ENCODE measurements at regions of chr15 and their contacts with region 1.

Region 1: DNA sequence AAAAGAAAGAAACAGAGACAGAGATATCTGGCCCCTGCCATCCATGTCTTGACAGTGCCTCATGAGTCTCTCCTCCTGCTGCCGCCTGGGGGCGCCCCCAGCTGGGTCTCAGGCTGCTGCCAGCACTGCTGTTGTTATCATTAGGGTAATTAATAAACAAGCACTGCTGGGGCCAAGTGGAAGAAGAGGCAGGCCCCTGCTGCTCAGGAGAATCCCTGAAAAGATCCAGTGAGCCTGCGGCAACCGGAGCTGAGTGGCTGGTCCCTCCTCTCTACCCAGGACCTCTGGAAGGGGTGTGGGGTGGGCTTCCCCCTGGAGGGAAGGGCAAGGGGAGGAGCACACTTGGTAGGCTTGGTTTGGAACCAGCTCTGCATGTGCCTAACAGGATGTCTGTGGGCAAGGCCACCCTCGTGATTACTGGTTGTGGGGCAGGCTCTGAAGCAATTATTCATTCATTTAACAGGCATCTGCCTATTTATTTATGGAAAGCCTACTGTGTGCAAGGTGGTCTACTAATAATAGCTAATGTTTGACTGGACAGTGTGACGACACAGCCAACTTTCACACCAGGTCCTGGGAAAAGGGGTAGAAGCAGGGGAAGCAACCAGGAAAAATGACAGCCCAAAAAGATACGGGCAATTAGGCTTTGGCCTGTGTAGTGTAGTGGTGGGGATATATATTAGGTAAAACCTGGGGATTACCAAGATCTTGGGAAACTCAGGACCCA is 1.2 kb upstream of the TYRO3 start:
- DNase-seq: peak; percentile 47
- ATAC-seq: peak; percentile 69
- H3K4me3 ChIP-seq: peak overlapping the region; percentile 67 to 82 (median 77)
- H3K27ac ChIP-seq: no peak overlapping the region
- H3K4me1 ChIP-seq: peaks cover 65% of the 10 kb centered on the region
- H3K27me3 ChIP-seq: peaks cover 0 to 8% of the 10 kb centered on the region in 2 experiments; a peak in 2 of 5 replicates
- CTCF ChIP-seq: peak; percentile 88
- EP300 ChIP-seq: no peak
- POLR2A ChIP-seq: no peak
- RAD21 ChIP-seq: peak; percentile 90

Region 2: GRCh38 chr15:41568350-41569017 is 10.6 kb after region 1 on chr15:
- CTCF ChIA-PET with region 1: interaction called, 6 read pairs
- POLR2A ChIA-PET with region 1: interaction called, 24 read pairs
- in situ Hi-C with region 1: no loop called
- intact Hi-C with region 1: loop called (anchors 1 kb)
- DNase-seq: peak; percentile 98
- ATAC-seq: peak; percentile 88
- H3K4me3 ChIP-seq: peak overlapping the region in 2 of 3 experiments; percentile 14 to 54; a peak in 4 of 6 replicates
- H3K27ac ChIP-seq: peak overlapping the region; percentile 91
- H3K4me1 ChIP-seq: peaks cover 84% of the 10 kb centered on the region
- H3K27me3 ChIP-seq: no peaks in the 10 kb centered on the region
- CTCF ChIP-seq: peak; percentile 42
- EP300 ChIP-seq: peak; percentile 83 to 94
- POLR2A ChIP-seq: peak in 1 of 2 experiments; percentile 49; a peak in 2 of 4 replicates
- RAD21 ChIP-seq: 0 out of 2 replicates have a peak, but pooled peaks have one; percentile 53

Region 3: GRCh38 chr15:41603941-41604911 is 46.4 kb after region 1 on chr15:
- CTCF ChIA-PET with region 1: interaction called, 17 read pairs
- POLR2A ChIA-PET with region 1: interaction called, 5 read pairs
- in situ Hi-C with region 1: no loop called
- intact Hi-C with region 1: loop called (anchors 5 kb)
- DNase-seq: peak; percentile 63
- ATAC-seq: peak; percentile 95
- H3K4me3 ChIP-seq: peak overlapping the region in 1 of 3 experiments; percentile 47; a peak in 2 of 6 replicates
- H3K27ac ChIP-seq: no peak overlapping the region
- H3K4me1 ChIP-seq: peaks cover 23% of the 10 kb centered on the region
- H3K27me3 ChIP-seq: no peaks in the 10 kb centered on the region
- CTCF ChIP-seq: peak; percentile 86
- EP300 ChIP-seq: no peak
- POLR2A ChIP-seq: no peak
- RAD21 ChIP-seq: peak; percentile 78

Region 4: GRCh38 chr15:41811432-41812195 is 253.8 kb after region 1 on chr15:
- CTCF ChIA-PET with region 1: no interaction called
- POLR2A ChIA-PET with region 1: no interaction called
- in situ Hi-C with region 1: no loop called
- intact Hi-C with region 1: loop called (anchors 5 kb)
- DNase-seq: peak; percentile 69
- ATAC-seq: peak; percentile 93
- H3K4me3 ChIP-seq: no peak overlapping the region
- H3K27ac ChIP-seq: no peak overlapping the region
- H3K4me1 ChIP-seq: no peaks in the 10 kb centered on the region
- H3K27me3 ChIP-seq: no peaks in the 10 kb centered on the region
- CTCF ChIP-seq: peak; percentile 88
- EP300 ChIP-seq: no peak
- POLR2A ChIP-seq: no peak
- RAD21 ChIP-seq: peak; percentile 95